PC-9 (cell line): ENCODE measurements at regions of chr9 and their contacts with region 1.

Region 1: DNA sequence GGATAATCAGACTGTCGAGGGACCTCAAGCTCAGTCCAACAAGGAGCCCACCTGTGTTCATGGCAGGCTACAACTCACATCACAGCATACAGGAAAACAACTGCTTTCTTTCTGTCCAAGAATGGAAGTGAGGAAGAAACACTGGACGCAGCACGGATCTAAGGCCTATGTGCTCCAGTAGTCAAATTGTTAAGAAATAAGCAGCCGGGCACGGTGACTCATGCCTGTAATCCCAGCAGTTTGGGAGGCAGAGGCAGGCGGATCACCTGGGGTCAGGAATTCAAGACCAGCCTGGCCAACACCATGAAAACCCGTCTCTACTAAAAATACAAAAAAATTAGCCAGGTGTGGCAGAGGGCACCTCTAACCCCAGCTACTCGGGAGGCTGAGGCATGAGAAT is 427.8 kb downstream of the BNC2 start:
- DNase-seq: peak; percentile 60 to 76
- H3K4me3 ChIP-seq: 0 out of 2 replicates have a peak overlapping the region, but pooled peaks have one; percentile 15
- H3K27ac ChIP-seq: peak overlapping the region; percentile 66
- H3K4me1 ChIP-seq: peaks cover 27% of the 10 kb centered on the region
- H3K27me3 ChIP-seq: no peaks in the 10 kb centered on the region
- CTCF ChIP-seq: no peak

Region 2: DNA sequence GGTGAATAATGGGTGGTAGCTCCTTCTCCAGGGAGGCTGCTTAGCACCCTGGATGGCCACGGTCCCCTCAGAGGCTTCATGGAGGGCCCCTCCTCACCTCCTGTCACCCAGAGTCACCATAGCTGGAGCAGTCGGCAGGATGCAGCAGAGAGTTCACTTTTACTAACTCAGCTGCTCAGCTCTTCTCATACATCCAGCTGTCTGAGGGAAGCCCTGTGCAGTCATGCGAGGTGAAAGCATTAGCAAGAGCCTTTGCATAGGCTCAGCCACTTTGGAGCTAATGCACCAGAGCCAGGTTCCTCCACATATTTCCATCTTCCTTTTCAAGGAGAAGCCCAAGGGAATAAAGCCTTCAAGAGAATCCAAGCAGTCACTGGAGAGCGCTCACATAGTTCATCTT is 71.3 kb before region 1 on chr9:
- CTCF ChIA-PET with region 1: no interaction called
- POLR2A ChIA-PET with region 1: no interaction called
- intact Hi-C with region 1: no loop called
- DNase-seq: no peak
- H3K4me3 ChIP-seq: no peak overlapping the region
- H3K27ac ChIP-seq: no peak overlapping the region
- H3K4me1 ChIP-seq: peaks cover 37% of the 10 kb centered on the region
- H3K27me3 ChIP-seq: no peaks in the 10 kb centered on the region
- CTCF ChIP-seq: no peak

Region 3: DNA sequence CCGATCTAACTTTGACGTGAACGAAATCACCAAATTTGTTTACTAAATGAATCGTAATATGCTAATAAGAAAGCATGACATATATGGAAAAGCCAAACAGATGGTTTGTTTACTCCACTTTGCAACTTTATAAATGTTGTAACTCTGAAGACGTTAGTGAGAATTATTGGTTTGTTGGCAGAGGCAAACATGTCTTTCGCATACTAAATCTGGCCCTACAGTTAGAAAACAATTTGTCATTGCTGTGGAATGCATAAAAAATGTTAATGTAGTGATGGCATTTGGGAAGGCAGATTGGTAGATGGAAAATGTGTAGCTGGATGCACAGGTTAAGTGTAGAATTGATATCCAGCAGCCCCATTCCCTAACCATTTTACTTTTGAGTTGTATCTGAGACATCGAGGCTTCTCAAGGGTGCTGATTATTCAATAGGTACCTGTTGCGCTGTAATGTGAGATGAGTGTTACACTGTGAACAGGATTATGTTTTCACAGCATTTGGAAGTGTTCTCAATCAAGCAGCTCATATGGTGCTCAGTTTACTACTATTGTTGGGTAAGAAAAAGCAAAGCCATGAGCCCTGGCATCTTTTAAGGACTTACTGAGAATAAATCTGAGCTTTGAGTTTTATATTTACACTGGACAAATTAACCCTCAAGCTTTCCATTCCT is 16.9 kb before region 1 on chr9:
- CTCF ChIA-PET with region 1: no interaction called
- POLR2A ChIA-PET with region 1: interaction called, 23 read pairs
- intact Hi-C with region 1: no loop called
- DNase-seq: no peak
- H3K4me3 ChIP-seq: no peak overlapping the region
- H3K27ac ChIP-seq: no peak overlapping the region
- H3K4me1 ChIP-seq: no peaks in the 10 kb centered on the region
- H3K27me3 ChIP-seq: no peaks in the 10 kb centered on the region
- CTCF ChIP-seq: no peak